PC-3 (cell line): ENCODE measurements at regions of chr4 and their contacts with region 1.

Region 1: GRCh38 chr4:123661080-123661737 is 264.6 kb downstream of the SPRY1 start:
- DNase-seq: peak; percentile 56
- ATAC-seq: no peak
- H3K4me3 ChIP-seq: no peak overlapping the region
- H3K27ac ChIP-seq: no peak overlapping the region
- H3K4me1 ChIP-seq: no peaks in the 10 kb centered on the region
- H3K27me3 ChIP-seq: no peaks in the 10 kb centered on the region
- CTCF ChIP-seq: peak; percentile 65

Region 2: GRCh38 chr4:123127218-123127617 is 534.0 kb before region 1 on chr4:
- CTCF ChIA-PET with region 1: no interaction called
- POLR2A ChIA-PET with region 1: no interaction called
- intact Hi-C with region 1: loop called (anchors 2 kb)
- DNase-seq: peak; percentile 37
- ATAC-seq: no peak
- H3K4me3 ChIP-seq: no peak overlapping the region
- H3K27ac ChIP-seq: no peak overlapping the region
- H3K4me1 ChIP-seq: peaks cover 7% of the 10 kb centered on the region
- H3K27me3 ChIP-seq: no peaks in the 10 kb centered on the region
- CTCF ChIP-seq: peak; percentile 54

Region 3: DNA sequence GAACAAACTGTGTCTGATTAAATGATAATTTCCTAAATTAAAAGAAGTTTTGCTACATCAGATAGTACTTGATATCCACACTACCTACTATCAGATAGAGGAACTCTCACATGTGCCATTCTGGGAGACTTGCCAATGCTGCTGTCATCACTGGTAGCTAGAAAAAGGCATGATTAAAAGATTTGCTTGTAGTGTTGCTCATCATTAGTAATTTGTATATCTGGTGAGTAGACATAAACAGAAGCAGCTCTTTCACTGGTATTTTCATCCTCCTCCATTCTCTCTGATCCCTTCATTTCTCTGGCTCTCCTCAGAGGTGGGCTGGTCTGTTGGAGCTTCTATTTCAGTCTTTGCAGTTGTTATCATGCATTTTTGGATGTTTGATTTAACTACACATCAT is 208.6 kb before region 1 on chr4:
- CTCF ChIA-PET with region 1: no interaction called
- POLR2A ChIA-PET with region 1: no interaction called
- intact Hi-C with region 1: loop called (anchors 2 kb)
- DNase-seq: peak; percentile 90
- ATAC-seq: peak; percentile 30
- H3K4me3 ChIP-seq: no peak overlapping the region
- H3K27ac ChIP-seq: peak overlapping the region; percentile 46
- H3K4me1 ChIP-seq: peaks cover 36% of the 10 kb centered on the region
- H3K27me3 ChIP-seq: no peaks in the 10 kb centered on the region
- CTCF ChIP-seq: no peak

Region 4: GRCh38 chr4:123564758-123565346 is 96.4 kb before region 1 on chr4:
- CTCF ChIA-PET with region 1: interaction called, 3 read pairs
- POLR2A ChIA-PET with region 1: no interaction called
- intact Hi-C with region 1: loop called (anchors 5 kb)
- DNase-seq: peak; percentile 78
- ATAC-seq: peak; percentile 80
- H3K4me3 ChIP-seq: no peak overlapping the region
- H3K27ac ChIP-seq: no peak overlapping the region
- H3K4me1 ChIP-seq: peaks cover 27% of the 10 kb centered on the region
- H3K27me3 ChIP-seq: no peaks in the 10 kb centered on the region
- CTCF ChIP-seq: peak; percentile 96

Region 5: GRCh38 chr4:123671633-123672404 is 10.6 kb after region 1 on chr4:
- CTCF ChIA-PET with region 1: no interaction called
- POLR2A ChIA-PET with region 1: no interaction called
- intact Hi-C with region 1: no loop called
- DNase-seq: no peak
- ATAC-seq: no peak
- H3K4me3 ChIP-seq: no peak overlapping the region
- H3K27ac ChIP-seq: no peak overlapping the region
- H3K4me1 ChIP-seq: peaks cover 32% of the 10 kb centered on the region
- H3K27me3 ChIP-seq: no peaks in the 10 kb centered on the region
- CTCF ChIP-seq: no peak

Region 6: DNA sequence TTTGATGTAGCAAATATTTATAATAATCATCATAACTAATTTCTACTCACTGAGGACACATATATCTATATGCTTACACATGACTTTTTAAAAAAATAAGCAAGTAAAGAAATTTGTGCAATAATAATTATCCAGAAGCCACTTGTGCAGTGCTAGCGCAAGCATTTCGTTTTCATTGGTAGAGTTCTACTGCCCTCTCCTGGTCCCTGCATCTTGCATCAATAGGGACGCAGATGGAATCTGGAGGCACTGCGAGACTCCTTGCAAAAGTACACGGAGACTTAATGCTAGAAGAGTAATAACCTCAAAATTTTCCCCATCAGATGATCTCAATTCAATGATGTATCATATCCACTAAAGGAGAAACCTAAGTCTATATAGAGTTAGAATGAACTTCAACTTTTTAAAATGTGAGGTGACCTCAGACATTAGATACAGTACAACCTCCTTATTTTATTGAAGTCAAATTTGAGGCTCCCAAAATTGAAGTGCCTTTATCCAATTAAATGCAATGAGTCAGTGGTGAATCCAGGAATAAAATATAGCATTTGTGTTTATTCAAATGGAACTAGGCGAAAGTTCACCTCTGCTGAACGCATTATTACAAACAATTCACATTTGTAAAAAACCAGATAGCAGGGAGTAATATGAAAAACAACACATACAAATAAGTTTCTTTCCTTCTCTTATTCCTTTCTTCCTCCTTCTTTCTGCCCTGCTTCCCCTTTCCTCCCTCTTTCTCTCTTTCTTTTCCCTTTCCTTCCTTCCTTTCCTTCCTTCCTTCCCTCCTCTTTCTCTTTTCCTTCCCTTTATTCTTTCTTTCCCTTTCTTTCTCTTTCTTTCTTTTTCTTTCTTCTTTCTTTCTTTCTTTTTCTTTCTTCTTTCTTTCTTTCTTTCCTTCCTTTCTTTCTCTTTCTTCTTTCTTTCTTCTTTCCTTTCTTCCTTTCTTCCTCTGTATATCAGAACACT is 601.3 kb after region 1 on chr4:
- CTCF ChIA-PET with region 1: no interaction called
- POLR2A ChIA-PET with region 1: no interaction called
- intact Hi-C with region 1: loop called (anchors 5 kb)
- DNase-seq: peak; percentile 87
- ATAC-seq: peak; percentile 98
- H3K4me3 ChIP-seq: no peak overlapping the region; the same call in 1 of the 2 replicates
- H3K27ac ChIP-seq: no peak overlapping the region
- H3K4me1 ChIP-seq: peaks cover 8% of the 10 kb centered on the region
- H3K27me3 ChIP-seq: no peaks in the 10 kb centered on the region
- CTCF ChIP-seq: peak; percentile 87